SK-MEL-5 (cell line): ENCODE measurements at regions of chr1 and their contacts with region 1.

Region 1: GRCh38 chr1:94541175-94542087 is at the start of gene F3:
- DNase-seq: peak; percentile 71
- total RNA-seq, gene F3: 3.0 and 5.1 TPM in 2 replicates

Region 2: DNA sequence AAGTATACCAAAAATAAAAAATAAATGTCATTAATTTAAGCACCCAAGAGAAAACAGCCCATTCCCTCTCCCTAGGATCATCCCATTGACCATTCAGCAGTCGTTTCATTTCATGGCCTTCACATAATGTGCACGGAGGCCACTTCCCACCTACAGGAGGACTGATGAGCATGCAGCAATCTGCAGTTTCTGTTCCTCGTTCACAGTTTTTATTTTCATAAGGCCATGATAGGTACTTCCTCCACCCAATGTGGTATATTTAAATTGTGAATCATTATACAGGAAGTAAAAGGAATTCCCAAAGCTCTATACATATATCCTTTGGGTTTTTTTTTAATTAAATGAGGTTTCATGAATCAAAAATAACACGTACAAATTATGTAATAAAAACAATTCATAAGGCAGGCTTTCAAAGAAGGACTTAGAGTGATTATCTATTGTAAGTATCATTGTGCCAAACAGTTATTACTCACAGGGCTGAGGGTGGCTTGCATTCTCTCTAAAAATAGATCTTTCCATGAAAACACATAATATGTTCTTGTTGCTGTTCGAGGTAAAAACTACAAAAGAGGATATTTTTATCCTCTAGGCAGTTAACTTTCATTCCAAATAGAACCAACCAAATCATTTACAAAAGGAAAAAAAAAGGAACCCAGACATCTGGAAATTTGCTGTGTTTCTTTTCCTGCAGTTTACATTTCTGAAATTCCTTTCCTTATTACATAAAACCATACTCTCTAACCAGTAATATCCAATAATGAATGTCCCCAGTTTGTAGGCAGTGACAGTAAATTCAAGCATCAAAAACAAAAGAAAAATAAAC is 251.3 kb after region 1 on chr1:
- in situ Hi-C with region 1: loop called (anchors 25 kb)
- DNase-seq: peak; percentile 63